PC-9 (cell line): ENCODE measurements at regions of chr7 and their contacts with region 1.

Region 1: GRCh38 chr7:135536150-135536549 is 21.6 kb upstream of the NUP205 start:
- DNase-seq: peak in 1 of 2 experiments; percentile 40
- H3K4me3 ChIP-seq: no peak overlapping the region
- H3K27ac ChIP-seq: no peak overlapping the region
- H3K4me1 ChIP-seq: no peaks in the 10 kb centered on the region
- H3K27me3 ChIP-seq: no peaks in the 10 kb centered on the region
- CTCF ChIP-seq: no peak

Region 2: DNA sequence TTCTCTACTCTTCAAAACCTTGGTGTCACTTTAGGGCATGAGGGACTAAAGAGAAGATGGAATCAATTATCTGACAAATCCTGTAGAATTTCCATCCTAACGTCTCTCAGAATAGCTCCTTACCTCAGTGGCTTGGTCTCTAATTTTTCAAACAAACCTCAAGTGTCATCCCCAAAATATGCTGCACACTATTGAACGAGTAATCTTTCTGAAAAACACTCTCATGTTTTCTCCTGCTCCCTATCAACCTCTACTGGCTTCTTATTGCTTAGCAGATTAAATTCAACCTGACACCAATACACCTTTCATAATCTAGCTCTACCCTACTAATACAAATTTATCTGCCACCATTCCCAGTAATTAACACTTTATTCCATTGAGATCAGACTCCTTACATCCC is 34.7 kb before region 1 on chr7:
- CTCF ChIA-PET with region 1: no interaction called
- POLR2A ChIA-PET with region 1: no interaction called
- intact Hi-C with region 1: no loop called
- DNase-seq: no peak
- H3K4me3 ChIP-seq: no peak overlapping the region
- H3K27ac ChIP-seq: no peak overlapping the region
- H3K4me1 ChIP-seq: no peaks in the 10 kb centered on the region
- H3K27me3 ChIP-seq: no peaks in the 10 kb centered on the region
- CTCF ChIP-seq: no peak

Region 3: GRCh38 chr7:135575296-135575695 is 39.1 kb after region 1 on chr7:
- CTCF ChIA-PET with region 1: no interaction called
- POLR2A ChIA-PET with region 1: no interaction called
- intact Hi-C with region 1: no loop called
- DNase-seq: no peak
- H3K4me3 ChIP-seq: no peak overlapping the region
- H3K27ac ChIP-seq: no peak overlapping the region
- H3K4me1 ChIP-seq: no peaks in the 10 kb centered on the region
- H3K27me3 ChIP-seq: no peaks in the 10 kb centered on the region
- CTCF ChIP-seq: no peak

Region 4: DNA sequence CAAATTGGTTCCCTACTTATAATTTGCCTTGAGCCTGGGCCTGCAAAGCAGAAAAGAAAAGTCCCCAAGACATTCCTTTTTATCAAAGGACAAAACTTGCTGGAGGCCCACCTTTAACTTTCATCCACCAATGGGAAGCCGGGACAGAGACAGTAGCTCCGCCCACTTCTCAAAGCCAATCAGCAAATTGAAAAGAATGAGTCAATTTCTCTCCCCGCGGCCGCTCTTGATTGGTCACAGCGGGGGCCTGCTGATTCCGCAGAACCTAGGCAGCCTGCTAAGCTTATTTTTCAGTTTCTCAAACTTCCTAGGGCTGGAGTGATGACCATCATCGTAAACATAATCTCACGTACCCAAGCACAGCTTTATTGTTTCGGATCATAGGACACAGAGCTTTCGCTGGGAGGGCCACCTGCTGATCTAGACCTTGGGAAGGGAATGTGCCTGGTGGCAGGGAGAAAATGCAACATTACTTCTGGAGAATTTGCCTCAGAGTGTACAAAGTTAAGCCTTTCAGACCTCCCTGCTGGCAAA is 192.1 kb after region 1 on chr7 and contains the start of gene SLC13A4:
- CTCF ChIA-PET with region 1: no interaction called
- POLR2A ChIA-PET with region 1: no interaction called
- intact Hi-C with region 1: no loop called
- DNase-seq: no peak
- H3K4me3 ChIP-seq: no peak within 1 kb of the TSS
- H3K27ac ChIP-seq: no peak within 1 kb of the TSS
- H3K4me1 ChIP-seq: peaks cover 7% of the 10 kb centered on the region
- H3K27me3 ChIP-seq: no peaks in the 10 kb centered on the region
- CTCF ChIP-seq: no peak
- total RNA-seq, gene SLC13A4: not detected in 2 replicates

Region 5: DNA sequence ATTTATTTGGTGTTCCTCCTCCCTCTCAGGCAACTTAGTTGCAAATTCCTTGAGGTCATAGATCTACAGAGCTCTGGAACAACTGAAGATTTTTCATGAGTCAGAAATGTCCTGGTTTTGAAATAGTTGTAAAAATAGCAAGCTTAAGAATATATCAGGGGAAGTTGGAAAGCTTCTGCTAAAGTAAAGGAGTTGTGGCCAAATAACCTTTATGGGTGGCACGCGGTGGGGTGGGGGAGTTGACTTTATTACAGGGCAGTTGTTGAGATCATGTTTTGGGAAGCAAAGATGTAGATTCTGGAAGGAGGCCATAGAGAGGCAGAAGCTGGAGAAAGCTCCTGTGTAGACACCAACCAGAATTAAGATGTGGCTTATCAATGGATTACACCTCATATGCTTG is 767.0 kb after region 1 on chr7:
- CTCF ChIA-PET with region 1: no interaction called
- POLR2A ChIA-PET with region 1: no interaction called
- intact Hi-C with region 1: no loop called
- DNase-seq: no peak
- H3K4me3 ChIP-seq: no peak overlapping the region
- H3K27ac ChIP-seq: no peak overlapping the region
- H3K4me1 ChIP-seq: no peaks in the 10 kb centered on the region
- H3K27me3 ChIP-seq: no peaks in the 10 kb centered on the region
- CTCF ChIP-seq: no peak

Region 6: DNA sequence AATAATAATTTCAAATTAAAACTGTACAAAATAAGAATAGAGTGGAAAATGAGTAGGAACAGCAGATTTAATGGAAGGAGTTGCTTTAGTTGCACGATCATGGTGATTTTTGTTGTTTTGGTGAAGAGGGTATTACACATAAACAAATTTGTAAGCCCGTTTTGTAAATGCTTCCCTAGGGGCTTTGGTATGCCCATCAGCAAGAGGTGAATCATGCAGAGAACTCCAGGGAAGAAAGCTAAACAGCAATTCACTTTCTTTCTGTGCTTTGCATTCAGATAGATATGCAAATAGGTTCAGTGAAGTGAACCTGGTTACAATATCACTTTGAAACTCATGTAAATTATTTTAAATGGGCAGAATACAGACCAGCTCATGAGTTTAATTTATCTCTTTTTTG is 863.2 kb after region 1 on chr7:
- CTCF ChIA-PET with region 1: no interaction called
- POLR2A ChIA-PET with region 1: interaction called, 18 read pairs
- intact Hi-C with region 1: no loop called
- DNase-seq: no peak
- H3K4me3 ChIP-seq: no peak overlapping the region
- H3K27ac ChIP-seq: no peak overlapping the region
- H3K4me1 ChIP-seq: no peaks in the 10 kb centered on the region
- H3K27me3 ChIP-seq: no peaks in the 10 kb centered on the region
- CTCF ChIP-seq: no peak